H1 (cell line): ENCODE measurements at regions of chr1 and their contacts with region 1.

Region 1: DNA sequence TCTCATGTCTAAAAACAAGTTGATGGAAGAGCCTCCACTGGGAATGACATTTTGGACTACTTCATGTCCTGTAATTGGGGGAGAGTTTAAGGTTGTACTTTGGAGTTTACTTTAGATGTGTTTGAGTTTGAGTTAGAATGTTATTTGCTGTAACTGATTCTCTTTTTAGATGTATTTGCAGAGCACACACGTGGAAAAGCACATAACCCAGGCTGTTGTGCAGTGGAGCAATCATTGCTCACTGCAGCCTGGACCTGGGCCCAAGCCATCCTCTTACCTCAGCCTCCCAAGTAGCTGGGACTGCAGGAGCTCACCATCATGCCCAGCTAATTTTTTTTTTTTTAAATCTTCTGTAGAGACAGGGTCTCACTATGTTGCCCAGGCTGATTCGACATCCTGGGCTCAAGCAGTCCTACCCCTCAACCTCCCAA is 36.7 kb upstream of the SH3D21 start:
- DNase-seq: no peak
- H3K4me3 ChIP-seq: no peak overlapping the region
- H3K27ac ChIP-seq: no peak overlapping the region
- H3K4me1 ChIP-seq: no peaks in the 10 kb centered on the region
- H3K27me3 ChIP-seq: no peaks in the 10 kb centered on the region
- CTCF ChIP-seq: no peak
- EP300 ChIP-seq: no peak
- POLR2A ChIP-seq: no peak
- RAD21 ChIP-seq: no peak

Region 2: DNA sequence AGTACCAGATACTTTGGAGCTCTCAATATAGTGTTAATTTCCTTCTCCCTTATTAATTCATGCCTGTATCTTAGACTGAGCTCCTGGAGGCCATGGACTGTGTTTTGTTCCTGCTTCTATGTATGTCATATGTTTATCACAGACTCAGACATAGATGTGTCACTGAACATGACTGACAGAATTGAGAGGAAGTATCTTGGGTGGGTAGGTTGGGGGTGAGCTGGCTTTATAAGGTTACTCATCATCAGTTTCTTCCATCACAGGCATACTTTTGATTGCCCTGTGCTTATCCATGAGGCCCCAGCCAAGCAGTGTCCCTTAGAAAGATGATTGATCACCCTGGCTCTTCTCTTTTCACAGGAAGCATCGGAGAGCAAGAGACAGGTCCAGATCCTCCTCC is 31.1 kb after region 1 on chr1:
- CTCF ChIA-PET with region 1: interaction called, 13 read pairs
- POLR2A ChIA-PET with region 1: no interaction called
- DNase-seq: no peak
- H3K4me3 ChIP-seq: no peak overlapping the region
- H3K27ac ChIP-seq: no peak overlapping the region
- H3K4me1 ChIP-seq: no peaks in the 10 kb centered on the region; a peak in 1 of 7 replicates
- H3K27me3 ChIP-seq: no peaks in the 10 kb centered on the region
- CTCF ChIP-seq: no peak
- EP300 ChIP-seq: no peak
- POLR2A ChIP-seq: no peak
- RAD21 ChIP-seq: no peak